ENCODE measurements at regions of chr6 and their contacts with region 1.

Region 1: DNA sequence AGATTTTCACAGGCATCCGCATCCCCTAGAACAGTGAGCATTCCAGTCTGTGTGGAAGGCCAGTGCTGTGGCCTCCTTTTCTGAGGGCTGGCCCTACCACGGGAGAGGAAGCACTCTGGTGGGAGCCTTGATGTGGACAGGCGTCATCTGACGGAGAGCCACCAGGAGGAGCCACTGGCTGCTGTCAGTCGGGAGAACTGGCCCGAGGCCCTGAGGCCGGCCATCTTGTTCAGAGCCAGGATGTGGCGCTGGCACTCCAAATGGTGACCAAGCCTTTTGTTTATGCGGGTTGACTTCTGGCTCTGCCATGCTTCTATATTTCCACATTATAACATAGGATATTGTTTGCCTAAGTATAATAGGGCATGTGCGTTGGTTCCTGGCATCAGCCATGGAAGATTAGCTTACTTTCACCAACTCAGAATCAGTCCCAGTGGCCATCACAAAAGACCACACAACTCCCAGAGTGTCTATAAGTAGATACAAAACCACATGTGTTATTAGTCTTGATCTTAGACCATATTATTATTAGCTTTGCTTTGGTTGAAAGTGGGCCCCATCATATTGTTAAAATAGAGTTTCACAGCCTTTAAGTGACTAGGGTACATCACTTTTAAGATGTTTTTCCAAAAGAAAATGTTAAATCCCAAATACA is 273.9 kb upstream of the TAB2 start:
- DNase-seq: peak; percentile 53
- H3K4me3 Mint-ChIP-seq: no peak overlapping the region
- H3K27ac Mint-ChIP-seq: no peak overlapping the region
- H3K4me1 Mint-ChIP-seq: peaks cover 33% of the 10 kb centered on the region
- H3K27me3 Mint-ChIP-seq: no peaks in the 10 kb centered on the region

Region 2: GRCh38 chr6:149065658-149066556 is 22.3 kb after region 1 on chr6:
- CTCF ChIA-PET with region 1: interaction called, 4 read pairs
- intact Hi-C with region 1: loop called (anchors 1 kb)
- DNase-seq: peak; percentile 66
- H3K4me3 Mint-ChIP-seq: peak overlapping the region; percentile 39
- H3K27ac Mint-ChIP-seq: peak overlapping the region; percentile 93
- H3K4me1 Mint-ChIP-seq: peaks cover 29% of the 10 kb centered on the region
- H3K27me3 Mint-ChIP-seq: no peaks in the 10 kb centered on the region